MCF 10A (cell line): ENCODE measurements at regions of chr19 and their contacts with region 1.

Region 1: GRCh38 chr19:17336872-17337722 is at the start of gene GTPBP3:
- DNase-seq: peak; percentile 99
- H3K4me3 Mint-ChIP-seq: peak within 1 kb of the TSS; percentile 98
- H3K27ac Mint-ChIP-seq: peak within 1 kb of the TSS; percentile 93
- H3K4me1 Mint-ChIP-seq: peaks cover 15% of the 10 kb centered on the region
- H3K27me3 Mint-ChIP-seq: no peaks in the 10 kb centered on the region
- CTCF ChIP-seq: no peak
- total RNA-seq, gene GTPBP3: 24.8 and 27.9 TPM in 2 replicates

Region 2: DNA sequence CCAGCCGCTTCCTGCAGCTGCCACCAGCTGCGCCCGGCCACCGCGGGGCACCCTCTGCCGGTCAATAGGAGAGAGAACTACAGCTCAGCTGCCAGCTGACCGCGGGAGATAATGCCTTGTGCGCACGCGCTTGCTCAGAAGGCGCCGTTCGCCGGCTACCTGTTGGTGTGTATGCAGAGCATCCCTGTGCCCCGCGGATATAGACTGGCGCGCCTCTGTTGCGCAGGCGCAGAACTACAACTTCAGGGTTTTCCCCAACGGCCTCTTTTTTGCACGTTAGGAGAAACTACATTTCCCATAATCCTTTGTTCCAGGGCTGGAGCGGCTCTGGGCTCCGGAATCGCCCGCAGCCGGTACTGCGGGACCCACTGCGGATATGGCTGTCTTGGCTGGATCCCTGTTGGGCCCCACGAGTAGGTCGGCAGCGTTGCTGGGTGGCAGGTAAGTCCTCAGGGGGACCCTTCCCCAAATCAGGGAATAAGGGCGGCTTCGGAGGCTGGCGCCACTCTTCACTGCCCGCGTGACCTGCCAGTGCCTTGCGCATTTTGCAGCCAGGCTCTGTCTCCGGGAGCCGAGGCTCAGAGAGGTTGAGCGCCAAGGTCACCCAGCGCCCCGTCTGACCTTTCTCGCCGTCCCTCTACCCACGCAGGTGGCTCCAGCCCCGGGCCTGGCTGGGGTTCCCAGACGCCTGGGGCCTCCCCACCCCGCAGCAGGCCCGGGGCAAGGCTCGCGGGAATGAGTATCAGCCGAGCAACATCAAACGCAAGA is 31.4 kb before region 1 on chr19 and contains the start of gene MRPL34:
- CTCF ChIA-PET with region 1: interaction called, 4 read pairs
- POLR2A ChIA-PET with region 1: interaction called, 152 read pairs
- intact Hi-C with region 1: loop called (anchors 1 kb)
- DNase-seq: peak; percentile 100
- H3K4me3 Mint-ChIP-seq: peak within 1 kb of the TSS; percentile 78
- H3K27ac Mint-ChIP-seq: peak within 1 kb of the TSS; percentile 55
- H3K4me1 Mint-ChIP-seq: peaks cover 32% of the 10 kb centered on the region
- H3K27me3 Mint-ChIP-seq: no peaks in the 10 kb centered on the region
- CTCF ChIP-seq: peak; percentile 62
- total RNA-seq, gene MRPL34: 58.8 and 65.8 TPM in 2 replicates

Region 3: DNA sequence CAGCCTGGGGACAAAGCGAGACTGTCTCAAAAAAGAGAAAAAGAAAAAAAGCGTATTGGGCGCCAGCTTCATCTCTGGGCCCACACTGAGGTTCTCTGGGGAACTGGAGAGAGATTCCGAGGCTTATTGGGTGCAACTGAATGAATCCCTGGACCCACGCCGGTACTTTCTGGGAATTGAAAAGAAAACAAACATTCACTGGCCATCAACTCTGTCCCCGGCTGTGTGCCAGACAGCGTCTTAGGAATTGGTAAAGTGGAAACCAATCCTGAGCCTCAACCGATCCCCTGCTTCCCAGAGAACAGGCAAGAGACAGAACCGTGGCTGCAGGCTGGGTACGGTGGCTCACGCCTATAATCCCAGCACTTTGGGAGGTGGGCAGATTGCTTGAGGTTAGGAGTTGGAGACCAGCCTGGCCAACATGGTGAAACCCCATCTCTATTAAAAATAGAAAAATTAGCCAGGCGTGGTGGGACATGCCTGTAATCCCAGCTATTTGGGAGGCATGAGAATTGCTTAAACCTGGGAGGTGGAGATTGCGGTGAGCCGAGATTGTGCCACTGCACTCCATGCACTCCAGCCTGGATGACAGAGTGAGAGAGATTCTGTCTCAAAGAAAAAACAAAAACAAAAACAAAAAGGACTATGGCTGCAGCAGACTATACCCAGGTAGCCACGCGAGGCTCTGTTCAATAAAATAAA is 11.0 kb before region 1 on chr19:
- CTCF ChIA-PET with region 1: interaction called, 4 read pairs
- POLR2A ChIA-PET with region 1: interaction called, 15 read pairs
- intact Hi-C with region 1: no loop called
- DNase-seq: peak; percentile 80
- H3K4me3 Mint-ChIP-seq: no peak overlapping the region
- H3K27ac Mint-ChIP-seq: no peak overlapping the region
- H3K4me1 Mint-ChIP-seq: peaks cover 5% of the 10 kb centered on the region
- H3K27me3 Mint-ChIP-seq: no peaks in the 10 kb centered on the region
- CTCF ChIP-seq: no peak

Region 4: GRCh38 chr19:17576759-17577473 is 239.8 kb after region 1 on chr19:
- CTCF ChIA-PET with region 1: no interaction called
- POLR2A ChIA-PET with region 1: no interaction called
- intact Hi-C with region 1: no loop called
- DNase-seq: peak; percentile 71
- H3K4me3 Mint-ChIP-seq: no peak overlapping the region
- H3K27ac Mint-ChIP-seq: no peak overlapping the region
- H3K4me1 Mint-ChIP-seq: peaks cover 11% of the 10 kb centered on the region
- H3K27me3 Mint-ChIP-seq: no peaks in the 10 kb centered on the region
- CTCF ChIP-seq: no peak